Activated CD8-positive, alpha-beta memory T cell treated with anti-CD3 and anti-CD28 coated beads, Interleukin-2, amount 10 ng/mL, durations not matched to agents 7 days and 5 days (primary cell): ENCODE measurements at regions of chr1 and their contacts with region 1.

Region 1: DNA sequence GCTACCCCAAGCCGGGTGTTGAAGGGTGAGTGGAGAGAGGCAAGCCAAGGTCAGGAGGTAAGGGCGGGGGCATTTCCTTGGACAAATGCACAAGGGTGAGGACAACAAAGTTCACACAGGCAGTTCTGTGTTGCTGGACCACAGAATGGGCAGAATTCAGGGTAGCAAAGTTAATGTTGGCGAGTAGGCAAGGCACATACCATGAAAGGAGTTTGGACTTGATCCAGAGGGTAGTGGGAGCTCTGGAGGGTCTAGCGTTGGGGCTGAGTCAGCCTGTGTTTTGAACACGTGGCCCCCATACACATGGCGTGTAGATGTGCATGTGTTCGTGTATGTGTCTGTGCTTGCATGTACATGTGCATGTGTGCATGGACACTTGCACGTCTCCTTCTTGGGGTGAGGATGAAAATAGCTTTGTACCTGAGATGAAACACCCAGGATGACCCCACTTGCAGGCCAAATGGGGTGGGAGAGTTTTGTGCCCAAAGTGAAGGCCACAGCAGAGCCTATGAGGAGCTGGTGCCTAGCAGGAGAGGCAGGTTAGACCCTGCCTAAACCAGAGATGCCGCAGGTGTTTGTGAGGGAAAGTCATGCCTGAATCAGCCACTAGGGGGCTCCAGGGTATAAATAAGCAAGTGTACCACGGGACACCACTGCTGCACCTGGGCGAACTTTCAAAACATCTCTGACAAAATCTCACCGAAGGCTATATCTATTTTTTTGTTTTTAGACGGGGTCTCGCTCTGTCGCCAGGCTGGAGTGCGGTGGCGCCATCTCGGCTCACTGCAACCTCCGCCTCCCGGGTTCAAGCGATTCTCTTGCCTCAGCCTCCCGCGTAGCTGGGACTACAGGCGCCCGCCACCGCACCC is 21.8 kb downstream of the SLC27A3 start:
- DNase-seq: peak; percentile 91
- ATAC-seq: peak; percentile 75
- H3K4me3 Mint-ChIP-seq: no peak overlapping the region
- H3K27ac Mint-ChIP-seq: peak overlapping the region; percentile 13
- H3K4me1 Mint-ChIP-seq: peaks cover 26% of the 10 kb centered on the region
- H3K27me3 Mint-ChIP-seq: no peaks in the 10 kb centered on the region

Region 2: GRCh38 chr1:153510984-153511410 is 286.0 kb before region 1 on chr1:
- CTCF ChIA-PET with region 1: no interaction called
- DNase-seq: peak; percentile 87
- ATAC-seq: peak; percentile 94
- H3K4me3 Mint-ChIP-seq: no peak overlapping the region
- H3K27ac Mint-ChIP-seq: peak overlapping the region; percentile 55
- H3K4me1 Mint-ChIP-seq: peaks cover 23% of the 10 kb centered on the region
- H3K27me3 Mint-ChIP-seq: no peaks in the 10 kb centered on the region

Region 3: GRCh38 chr1:153775458-153776327 is 21.3 kb before region 1 on chr1:
- CTCF ChIA-PET with region 1: interaction called, 13 read pairs
- DNase-seq: peak; percentile 90
- ATAC-seq: peak; percentile 78
- H3K4me3 Mint-ChIP-seq: peak overlapping the region; percentile 87
- H3K27ac Mint-ChIP-seq: peak overlapping the region; percentile 97
- H3K4me1 Mint-ChIP-seq: peaks cover 40% of the 10 kb centered on the region
- H3K27me3 Mint-ChIP-seq: no peaks in the 10 kb centered on the region

Region 4: GRCh38 chr1:153967082-153968000 is 170.3 kb after region 1 on chr1 and contains the start of gene CREB3L4:
- CTCF ChIA-PET with region 1: interaction called, 15 read pairs
- DNase-seq: peak; percentile 92
- ATAC-seq: peak; percentile 86
- H3K4me3 Mint-ChIP-seq: peak within 1 kb of the TSS; percentile 97
- H3K27ac Mint-ChIP-seq: peak within 1 kb of the TSS; percentile 96
- H3K4me1 Mint-ChIP-seq: peaks cover 50% of the 10 kb centered on the region
- H3K27me3 Mint-ChIP-seq: no peaks in the 10 kb centered on the region
- total RNA-seq, gene CREB3L4: 6.3 to 8.5 TPM

Region 5: DNA sequence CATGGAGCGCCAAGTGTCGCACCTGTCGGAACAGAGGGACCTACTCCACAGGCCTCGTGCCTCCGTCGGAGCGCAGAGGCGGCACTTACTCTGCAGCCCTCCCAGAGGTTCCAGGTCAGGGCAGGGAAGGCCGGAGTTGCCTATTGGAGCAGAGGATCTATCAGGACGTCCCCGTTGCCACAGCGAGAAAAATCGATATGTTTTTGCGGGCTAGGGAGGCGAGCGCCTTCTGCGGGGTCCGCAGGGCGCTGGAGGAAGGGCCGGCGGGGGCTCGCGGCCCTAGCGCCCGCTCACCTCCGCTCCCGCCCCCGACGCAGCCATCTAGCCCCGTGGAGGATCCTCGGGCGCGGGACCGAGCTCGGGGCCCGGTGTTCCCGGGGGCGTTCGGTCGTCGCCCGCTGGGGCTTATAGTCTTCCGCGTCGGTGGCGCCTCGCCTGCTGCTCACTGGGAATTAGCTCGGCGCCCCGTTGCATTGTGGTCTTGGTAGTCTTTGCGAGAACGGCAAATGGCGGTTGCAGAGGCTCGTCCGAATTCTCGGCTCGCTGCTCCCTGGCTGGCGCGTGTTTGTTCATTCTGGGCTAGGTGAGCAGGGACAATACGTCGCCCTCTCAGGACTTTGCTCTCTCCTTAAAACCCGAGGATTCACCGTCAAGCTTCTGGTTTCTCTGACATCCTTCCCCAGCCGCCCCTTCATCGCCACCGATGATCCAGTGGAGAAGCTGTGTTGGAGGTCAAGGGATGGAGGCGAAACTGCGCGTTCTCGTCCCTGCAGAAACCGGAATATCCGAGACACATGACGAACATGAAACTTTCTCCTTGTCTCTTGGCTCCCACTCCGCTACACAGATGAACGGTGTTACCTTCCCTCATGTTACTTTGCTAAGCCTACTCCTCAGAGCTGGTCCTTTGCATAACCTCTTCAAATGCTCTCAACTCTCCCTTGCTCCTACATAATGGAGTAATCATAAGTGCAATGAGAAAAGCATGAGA is 180.5 kb after region 1 on chr1 and contains the start of gene JTB:
- CTCF ChIA-PET with region 1: interaction called, 16 read pairs
- DNase-seq: peak; percentile 91
- ATAC-seq: peak; percentile 97
- H3K4me3 Mint-ChIP-seq: peak within 1 kb of the TSS; percentile 95
- H3K27ac Mint-ChIP-seq: peak within 1 kb of the TSS; percentile 94
- H3K4me1 Mint-ChIP-seq: peaks cover 41% of the 10 kb centered on the region
- H3K27me3 Mint-ChIP-seq: no peaks in the 10 kb centered on the region
- total RNA-seq, gene JTB: 127 to 156 TPM

Region 6: DNA sequence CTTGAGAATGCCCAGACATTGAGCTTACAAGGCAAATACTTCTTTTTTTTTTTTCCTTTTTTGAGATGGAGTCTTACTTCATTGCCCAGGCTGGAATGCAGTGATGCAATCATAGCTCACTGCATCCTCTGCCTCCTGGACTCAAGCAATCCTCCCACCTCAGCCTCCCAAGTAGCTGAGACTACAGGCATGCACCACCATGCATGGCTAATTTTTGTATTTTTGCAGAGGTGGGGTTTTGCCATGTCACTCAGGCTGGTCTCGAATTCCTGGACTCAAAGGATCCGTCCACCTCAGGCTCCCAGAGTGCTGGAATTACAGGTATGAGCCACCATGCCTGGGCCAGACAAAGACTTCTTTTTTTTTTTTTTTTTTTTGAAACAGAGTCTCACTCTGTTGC is 278.7 kb after region 1 on chr1:
- CTCF ChIA-PET with region 1: no interaction called
- DNase-seq: no peak
- ATAC-seq: no peak
- H3K4me3 Mint-ChIP-seq: no peak overlapping the region
- H3K27ac Mint-ChIP-seq: no peak overlapping the region
- H3K4me1 Mint-ChIP-seq: no peaks in the 10 kb centered on the region
- H3K27me3 Mint-ChIP-seq: peaks cover 17% of the 10 kb centered on the region